Right lobe of liver (tissue), 6 donors: ENCODE measurements at regions of chr11 and their contacts with region 1.

Region 1: DNA sequence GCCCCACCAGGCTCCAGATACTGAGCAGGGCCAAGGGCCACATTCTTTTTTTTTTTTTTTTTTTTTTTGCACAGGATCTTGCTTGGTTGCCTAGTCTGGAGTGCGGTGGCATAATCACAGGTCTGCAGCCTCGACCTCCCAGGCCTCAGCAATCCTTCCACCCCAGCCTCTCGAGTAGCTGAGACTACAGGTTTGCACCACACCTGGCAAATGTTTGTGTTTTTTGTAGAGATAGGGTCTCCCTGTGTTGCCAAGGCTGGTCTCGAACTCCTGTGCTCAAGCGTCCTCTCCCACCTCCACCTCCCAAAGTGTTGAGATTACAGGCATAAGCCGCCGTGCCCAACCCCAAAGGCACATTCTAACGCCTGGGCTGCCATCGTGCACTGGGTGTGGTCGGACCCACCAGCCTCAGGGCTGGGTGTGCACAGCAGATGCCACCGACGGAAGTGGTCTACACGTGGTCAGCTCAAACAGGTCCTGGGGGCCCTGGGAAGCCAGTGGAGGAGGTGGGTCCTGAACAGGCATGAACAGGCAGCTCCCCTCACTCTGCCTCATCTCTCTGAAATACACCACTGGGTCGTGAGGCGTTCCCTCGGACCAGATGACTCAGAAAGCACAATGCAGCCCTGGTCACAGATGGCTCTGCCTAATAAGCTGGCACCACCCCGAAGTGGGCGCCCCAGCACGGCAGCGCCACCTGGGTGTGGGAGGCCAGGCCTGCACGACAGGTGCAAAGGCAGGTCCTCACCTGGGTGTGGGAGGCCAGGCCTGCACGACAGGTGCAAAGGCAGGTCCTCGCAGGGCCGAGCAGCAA is 5.1 kb upstream of the B4GALNT4 start:
- DNase-seq: peak in 2 of 3 donors; percentile 33 to 52
- ATAC-seq: peak; percentile 53 to 81 (median 74)
- H3K4me3 ChIP-seq: no peak overlapping the region
- H3K27ac ChIP-seq: no peak overlapping the region
- H3K4me1 ChIP-seq: no peaks in the 10 kb centered on the region
- H3K27me3 ChIP-seq: peaks cover 0 to 7% of the 10 kb centered on the region in 2 donors
- CTCF ChIP-seq: peak; percentile 25 to 60 (median 36)
- POLR2A ChIP-seq: no peak

Region 2: GRCh38 chr11:250740-251299 is 113.3 kb before region 1 on chr11:
- intact Hi-C with region 1: loop called in 1 of 2 experiments (anchors 10 kb)
- DNase-seq: peak in 1 of 3 donors; percentile 50
- ATAC-seq: peak; percentile 75 to 85 (median 80)
- H3K4me3 ChIP-seq: no peak overlapping the region
- H3K27ac ChIP-seq: no peak overlapping the region
- H3K4me1 ChIP-seq: no peaks in the 10 kb centered on the region
- H3K27me3 ChIP-seq: no peaks in the 10 kb centered on the region
- CTCF ChIP-seq: peak; percentile 50 to 65 (median 58)
- POLR2A ChIP-seq: no peak

Region 3: GRCh38 chr11:304915-305843 is 59.0 kb before region 1 on chr11:
- intact Hi-C with region 1: loop called in 1 of 2 experiments (anchors 10 kb)
- DNase-seq: peak in 2 of 3 donors; percentile 67 to 72
- ATAC-seq: peak; percentile 36 to 55 (median 52)
- H3K4me3 ChIP-seq: no peak overlapping the region
- H3K27ac ChIP-seq: no peak overlapping the region
- H3K4me1 ChIP-seq: peaks cover 0 to 23% (median 10%) of the 10 kb centered on the region in 4 donors
- H3K27me3 ChIP-seq: no peaks in the 10 kb centered on the region
- CTCF ChIP-seq: peak; percentile 61 to 81 (median 74)
- POLR2A ChIP-seq: no peak

Region 4: DNA sequence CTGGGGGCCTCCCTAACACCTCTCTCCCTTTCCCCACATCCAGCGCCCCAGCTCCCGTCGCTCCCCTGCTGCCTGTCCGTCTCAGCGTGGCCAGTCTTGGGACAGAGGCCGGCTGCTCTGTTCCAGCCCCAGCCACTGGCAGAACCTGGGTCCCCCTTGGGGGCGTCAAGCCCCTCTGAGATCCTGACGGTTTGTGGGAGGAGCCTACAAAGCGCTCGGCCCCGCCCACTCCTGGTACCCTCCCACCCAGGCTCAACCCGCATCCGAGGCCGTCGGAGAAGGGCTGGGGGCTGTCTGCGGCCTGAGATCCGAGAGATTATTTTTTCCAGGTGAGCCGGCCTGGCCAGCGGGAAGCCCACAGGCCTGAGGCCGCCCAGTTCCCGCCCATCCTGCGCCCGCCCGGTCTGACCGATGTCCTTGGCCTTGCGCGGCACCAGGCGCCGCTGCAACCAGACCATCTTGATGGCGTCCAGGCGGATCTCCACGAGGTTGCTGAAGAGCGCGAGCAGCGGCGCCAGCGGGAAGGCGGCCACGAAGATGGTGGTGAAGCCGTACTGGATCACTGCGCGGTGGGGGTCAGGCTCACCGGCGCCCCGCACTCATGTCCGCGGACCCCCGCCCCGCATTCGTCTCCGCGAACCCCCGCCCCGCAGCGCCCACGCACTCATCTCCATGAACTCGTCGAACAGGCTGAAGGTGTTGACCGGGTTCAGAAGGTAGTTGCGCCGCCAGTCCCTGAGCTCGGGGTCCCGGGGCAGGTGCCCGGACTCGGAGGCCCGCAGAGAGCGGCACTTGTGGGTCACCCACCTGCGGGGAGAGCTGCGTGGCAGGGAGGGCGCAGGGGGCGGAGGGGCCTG is 56.1 kb after region 1 on chr11:
- intact Hi-C with region 1: no loop called
- DNase-seq: peak in 2 of 3 donors; percentile 16 to 51
- ATAC-seq: no peak
- H3K4me3 ChIP-seq: no peak overlapping the region
- H3K27ac ChIP-seq: no peak overlapping the region
- H3K4me1 ChIP-seq: peaks cover 0 to 8% (median 0%) of the 10 kb centered on the region in 4 donors
- H3K27me3 ChIP-seq: no peaks in the 10 kb centered on the region
- CTCF ChIP-seq: no peak
- POLR2A ChIP-seq: no peak